HEK293 (cell line): ENCODE measurements at regions of chr1 and their contacts with region 1.

Region 1: GRCh38 chr1:158087320-158087927 is 93.3 kb upstream of the CD1D start:
- H3K4me3 ChIP-seq: no peak overlapping the region
- H3K27ac ChIP-seq: no peak overlapping the region
- H3K4me1 ChIP-seq: no peaks in the 10 kb centered on the region
- CTCF ChIP-seq: peak; percentile 84

Region 2: GRCh38 chr1:157963713-157964112 is 123.7 kb before region 1 on chr1:
- CTCF ChIA-PET with region 1: interaction called, 30 read pairs
- POLR2A ChIA-PET with region 1: no interaction called
- H3K4me3 ChIP-seq: no peak overlapping the region
- H3K27ac ChIP-seq: no peak overlapping the region
- H3K4me1 ChIP-seq: no peaks in the 10 kb centered on the region
- CTCF ChIP-seq: peak; percentile 84

Region 3: GRCh38 chr1:157984469-157984868 is 103.0 kb before region 1 on chr1:
- CTCF ChIA-PET with region 1: interaction called, 132 read pairs
- POLR2A ChIA-PET with region 1: no interaction called
- H3K4me3 ChIP-seq: no peak overlapping the region
- H3K27ac ChIP-seq: no peak overlapping the region
- H3K4me1 ChIP-seq: no peaks in the 10 kb centered on the region
- CTCF ChIP-seq: no peak

Region 4: DNA sequence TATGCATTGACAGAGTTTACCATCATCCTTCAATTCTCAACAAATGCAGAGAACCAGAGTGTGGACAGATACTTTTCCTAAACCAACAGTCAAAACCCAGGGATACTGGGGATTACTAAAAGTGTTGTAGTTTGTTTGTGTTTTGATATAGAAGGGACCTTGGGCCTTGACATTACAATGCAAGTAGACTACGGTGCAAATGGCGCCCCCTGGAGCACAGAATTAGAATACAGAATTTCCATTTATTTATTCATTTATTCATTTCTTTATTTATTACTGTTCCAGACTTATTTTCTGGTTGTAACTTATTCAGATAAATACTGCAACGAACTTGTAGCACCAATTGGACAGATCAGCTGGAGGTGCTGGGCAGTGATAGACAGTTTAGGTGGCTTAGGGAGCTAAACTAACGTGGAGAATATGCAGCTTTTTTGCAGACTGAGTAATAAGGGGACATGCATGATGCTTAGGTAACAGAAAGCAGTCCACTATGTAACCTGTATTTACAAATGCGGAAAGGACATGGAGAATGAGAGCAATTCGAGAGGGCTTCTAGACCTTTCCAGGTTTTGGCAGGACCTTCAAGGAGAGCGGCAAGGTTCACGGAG is 51.3 kb before region 1 on chr1:
- CTCF ChIA-PET with region 1: interaction called, 11 read pairs
- POLR2A ChIA-PET with region 1: no interaction called
- H3K4me3 ChIP-seq: no peak overlapping the region
- H3K27ac ChIP-seq: no peak overlapping the region
- H3K4me1 ChIP-seq: no peaks in the 10 kb centered on the region
- CTCF ChIP-seq: 0 out of 2 replicates have a peak, but pooled peaks have one; percentile 36

Region 5: DNA sequence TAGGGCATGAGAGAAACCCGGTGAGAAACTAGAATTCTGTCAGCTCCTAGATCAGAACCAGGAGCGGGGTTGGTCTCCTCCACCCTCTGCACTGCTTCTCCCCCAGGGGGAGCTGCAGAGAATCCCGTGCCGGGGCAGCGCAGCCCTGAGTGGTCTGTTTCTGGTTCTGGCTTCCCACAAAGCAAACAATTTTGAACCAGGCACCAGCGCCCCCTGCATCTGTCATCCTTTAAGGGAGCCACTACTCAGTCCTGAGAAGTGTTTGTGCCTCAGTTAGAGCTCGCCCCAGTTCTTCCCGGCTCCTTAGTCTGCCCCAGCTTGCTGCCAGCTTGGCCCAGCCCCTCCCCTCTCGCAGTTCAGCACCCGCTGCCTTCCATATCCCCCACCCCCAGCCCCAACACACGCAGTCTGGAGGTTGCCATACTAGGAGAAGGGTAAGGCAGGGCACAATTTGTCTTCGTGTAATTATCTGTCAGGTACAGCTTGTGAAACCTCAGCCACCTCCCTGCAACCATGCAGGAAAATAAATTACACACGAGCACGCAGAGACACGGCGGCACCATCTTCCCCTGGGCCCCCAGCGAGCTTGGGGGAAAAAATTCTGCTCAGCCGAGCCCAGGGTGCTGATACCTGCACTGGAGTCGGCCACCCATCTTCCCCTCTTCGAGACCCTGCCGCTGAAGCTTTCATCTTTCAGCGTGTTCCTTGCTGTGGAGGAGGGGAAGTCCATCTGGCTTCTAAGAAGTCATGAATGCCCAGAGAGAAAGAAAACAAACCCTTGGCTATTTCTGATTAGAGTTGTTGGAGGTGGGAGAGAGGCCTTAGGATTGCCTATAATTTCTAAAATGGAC is 30.7 kb after region 1 on chr1:
- CTCF ChIA-PET with region 1: interaction called, 262 read pairs
- POLR2A ChIA-PET with region 1: no interaction called
- H3K4me3 ChIP-seq: no peak overlapping the region
- H3K27ac ChIP-seq: no peak overlapping the region
- H3K4me1 ChIP-seq: no peaks in the 10 kb centered on the region; the same call in 1 of the 2 replicates
- CTCF ChIP-seq: peak; percentile 62